Thyroid gland (tissue), 4 donors: ENCODE measurements at regions of chr3 and their contacts with region 1.

Region 1: GRCh38 chr3:14178247-14179113 is at the starts of genes LSM3 and XPC:
- DNase-seq: peak; percentile 94 to 96
- H3K4me3 ChIP-seq: peak within 1 kb of the TSS; percentile 81 to 92 (median 91)
- H3K27ac ChIP-seq: peak within 1 kb of the TSS; percentile 81 to 93 (median 88)
- H3K4me1 ChIP-seq: peaks cover 31 to 38% of the 10 kb centered on the region in 2 donors
- H3K27me3 ChIP-seq: no peaks in the 10 kb centered on the region
- CTCF ChIP-seq: no peak
- POLR2A ChIP-seq: peak; percentile 72 to 98
- total RNA-seq, gene LSM3: 9.9 to 15.6 (median 15.3) TPM
- total RNA-seq, gene XPC: 53.4 to 69.3 (median 60.8) TPM

Region 2: DNA sequence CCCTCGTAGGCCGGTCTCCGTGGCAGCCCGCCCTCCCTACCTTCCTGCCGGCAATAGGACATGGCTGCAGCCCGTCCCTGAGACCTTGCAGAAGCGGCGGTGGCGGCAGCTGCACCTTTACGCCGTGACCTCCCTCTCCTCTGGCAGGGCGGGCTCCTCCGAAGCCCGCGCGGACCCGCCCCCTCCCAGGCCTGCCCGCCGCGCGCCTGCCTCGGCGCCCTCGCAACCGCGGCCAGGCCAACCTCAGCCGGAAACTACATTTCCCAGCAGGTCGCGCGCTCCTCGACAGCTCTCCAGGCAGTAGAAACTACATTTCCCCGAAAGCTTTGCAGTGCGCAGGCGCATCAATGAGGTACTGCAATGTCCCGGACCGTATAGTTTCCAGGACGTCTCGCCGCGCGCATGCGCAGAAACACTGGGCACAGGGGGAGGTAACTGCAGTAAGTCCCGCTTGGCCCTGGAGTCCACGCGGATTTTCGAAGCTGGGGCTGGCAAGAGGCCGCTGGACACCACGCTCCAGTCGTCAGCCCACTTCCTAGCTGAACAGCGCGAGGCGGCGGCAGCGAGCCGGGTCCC is 53.8 kb before region 1 on chr3 and contains the starts of genes CHCHD4 and TMEM43:
- intact Hi-C with region 1: loop called (anchors 10 kb)
- DNase-seq: peak; percentile 99 to 100
- H3K4me3 ChIP-seq: peak within 1 kb of the TSS; percentile 81 to 99 (median 82)
- H3K27ac ChIP-seq: peak within 1 kb of the TSS; percentile 78 to 95 (median 94)
- H3K4me1 ChIP-seq: peaks cover 26 to 27% of the 10 kb centered on the region in 2 donors
- H3K27me3 ChIP-seq: no peaks in the 10 kb centered on the region
- CTCF ChIP-seq: peak in 1 of 6 experiments; percentile 9
- POLR2A ChIP-seq: peak; percentile 30 to 86
- total RNA-seq, gene CHCHD4: 15.1 to 20.2 (median 16.0) TPM
- total RNA-seq, gene TMEM43: 69.6 to 109 (median 90.3) TPM

Region 3: DNA sequence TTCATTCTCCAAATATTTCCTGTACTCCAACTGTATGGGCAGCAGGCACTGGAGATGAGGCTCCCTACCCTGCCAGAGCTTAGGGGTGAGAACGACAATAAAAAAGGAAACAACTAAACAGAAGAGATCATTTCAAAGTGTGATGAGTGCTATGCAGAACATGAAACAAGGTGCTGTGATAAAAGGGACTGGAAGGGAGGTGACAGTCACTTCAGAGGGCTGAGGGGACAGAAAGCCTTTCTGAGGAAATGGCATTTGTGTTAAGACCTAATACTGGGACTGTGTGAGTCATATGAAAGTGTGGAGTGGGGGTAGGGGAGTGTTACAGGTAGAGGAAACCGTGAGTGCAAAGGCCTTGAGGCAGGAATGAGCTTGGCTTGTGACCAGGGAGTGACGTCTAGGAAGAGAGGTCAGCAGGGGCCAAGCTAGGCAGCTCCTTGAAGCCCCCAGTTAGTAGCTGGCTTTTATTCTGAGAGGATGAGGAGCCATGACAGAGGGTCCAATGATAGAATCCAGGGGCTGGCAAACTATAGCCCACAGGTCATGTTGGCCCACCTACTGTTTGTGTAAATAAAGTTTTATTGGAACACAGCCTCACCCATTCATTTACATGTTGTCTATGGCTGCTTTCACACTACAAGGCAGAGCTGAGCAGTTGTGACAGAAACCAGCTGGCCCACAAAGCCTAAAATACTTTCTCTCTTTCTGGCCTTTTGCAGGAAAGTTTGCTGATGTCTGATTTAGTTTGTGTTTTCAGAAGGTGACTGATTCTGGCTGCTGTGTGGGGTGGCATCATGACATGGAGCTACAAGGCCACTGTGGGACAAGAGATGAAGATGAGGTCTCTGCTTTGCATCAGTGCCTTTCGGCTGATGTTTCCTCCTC is 56.8 kb after region 1 on chr3:
- intact Hi-C with region 1: no loop called
- DNase-seq: peak in 1 of 2 donors; percentile 30
- H3K4me3 ChIP-seq: no peak overlapping the region
- H3K27ac ChIP-seq: peak overlapping the region; percentile 80 to 92 (median 88)
- H3K4me1 ChIP-seq: peaks cover 42 to 69% of the 10 kb centered on the region in 2 donors
- H3K27me3 ChIP-seq: no peaks in the 10 kb centered on the region
- CTCF ChIP-seq: no peak
- POLR2A ChIP-seq: no peak